ENCODE measurements at regions of chr9 and their contacts with region 1.

Region 1: GRCh38 chr9:122099271-122099869 is 6.3 kb upstream of the TTLL11 start:
- DNase-seq: peak; percentile 93
- ATAC-seq: peak; percentile 81

Region 2: DNA sequence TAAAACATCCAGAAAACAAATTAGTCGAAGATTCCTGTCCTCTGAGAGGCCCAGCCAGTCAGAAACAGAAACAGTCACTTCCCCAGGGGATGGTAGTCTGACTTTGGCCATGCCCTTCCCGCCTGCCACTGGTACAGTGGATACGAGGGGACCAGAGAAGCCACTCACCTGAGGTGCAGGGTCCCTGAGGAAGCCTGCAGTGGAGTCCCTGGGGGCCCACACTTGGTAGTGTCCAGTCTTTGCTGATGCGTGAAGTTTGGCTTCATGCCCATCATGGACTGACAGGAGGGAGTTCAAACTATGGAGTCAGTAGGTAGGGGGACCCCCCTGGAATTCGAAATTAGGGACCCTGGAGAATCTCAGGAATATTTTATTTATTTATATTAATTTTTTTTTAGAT is 300.4 kb before region 1 on chr9:
- intact Hi-C with region 1: no loop called
- DNase-seq: no peak
- ATAC-seq: no peak

Region 3: DNA sequence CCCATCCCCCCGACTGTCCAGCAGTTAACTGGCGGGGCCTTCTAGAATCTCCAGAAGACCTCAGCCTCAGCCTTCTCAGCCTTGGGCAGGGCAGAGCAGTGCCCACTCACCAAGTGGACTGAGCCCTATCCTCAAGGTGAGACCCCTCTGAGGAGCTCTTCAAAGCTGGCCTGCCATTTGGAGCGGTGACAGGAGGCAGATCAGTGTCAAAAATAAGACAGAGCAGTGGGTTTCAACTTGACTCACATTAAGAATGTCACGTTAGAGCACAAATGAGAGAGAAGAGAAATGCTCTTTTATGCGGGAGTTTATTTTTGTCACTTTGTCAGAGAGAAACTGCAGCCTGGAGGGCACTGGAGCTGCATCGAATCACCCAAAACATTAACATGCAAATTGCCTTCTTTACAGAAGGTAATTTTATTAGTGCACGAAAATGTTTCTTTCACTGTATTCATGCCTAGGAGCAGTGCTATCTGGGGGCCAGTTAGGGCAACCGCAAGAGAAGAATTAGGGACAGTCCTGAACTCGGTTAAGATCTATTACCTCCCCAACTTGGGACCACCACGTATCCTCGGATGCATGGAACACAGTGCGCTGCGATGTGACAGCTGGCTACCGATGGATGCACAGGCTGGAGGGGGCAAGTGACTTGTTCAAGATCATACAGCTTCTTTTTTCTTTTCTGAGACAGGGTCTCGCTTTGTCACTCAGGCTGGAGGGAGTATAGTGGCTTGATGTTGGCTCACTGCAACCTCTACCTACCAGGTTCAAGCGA is 259.5 kb before region 1 on chr9:
- intact Hi-C with region 1: no loop called
- DNase-seq: no peak
- ATAC-seq: no peak

Region 4: GRCh38 chr9:121850366-121850765 is 249.0 kb before region 1 on chr9:
- intact Hi-C with region 1: no loop called
- DNase-seq: no peak
- ATAC-seq: no peak

Region 5: DNA sequence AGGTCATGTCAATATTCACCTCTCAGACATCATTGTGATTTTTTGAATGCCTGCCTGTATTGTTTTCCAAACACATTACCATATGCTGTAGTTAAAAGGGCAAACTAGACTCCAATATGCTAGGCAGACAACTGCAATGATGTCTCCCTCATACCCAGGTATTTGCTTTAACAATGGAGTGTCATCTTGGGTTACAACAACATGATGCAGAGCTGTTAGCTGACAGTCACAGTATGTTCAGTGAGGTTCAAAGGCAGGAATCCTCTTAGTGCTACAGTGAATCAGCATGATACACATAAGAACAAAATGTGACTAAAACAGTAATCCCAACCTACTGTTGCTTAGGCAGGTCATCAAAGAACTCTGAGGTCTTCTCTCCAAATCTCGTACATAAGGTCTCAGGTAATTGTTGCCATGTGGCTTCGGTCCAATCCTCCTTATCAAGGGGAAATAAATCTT is 354.3 kb after region 1 on chr9:
- intact Hi-C with region 1: loop called (anchors 2 kb)
- DNase-seq: no peak
- ATAC-seq: no peak

Region 6: GRCh38 chr9:122810306-122810946 is 711.1 kb after region 1 on chr9:
- intact Hi-C with region 1: loop called (anchors 5 kb)
- DNase-seq: no peak
- ATAC-seq: peak; percentile 85